ENCODE measurements at regions of chr13 and their contacts with region 1.

Region 1: GRCh38 chr13:78241278-78241919 is 322.8 kb upstream of the EDNRB start:
- DNase-seq: no peak
- H3K4me3 ChIP-seq: no peak overlapping the region
- H3K27ac ChIP-seq: no peak overlapping the region
- H3K4me1 ChIP-seq: no peaks in the 10 kb centered on the region
- H3K27me3 ChIP-seq: no peaks in the 10 kb centered on the region
- CTCF ChIP-seq: peak; percentile 52 to 80

Region 2: DNA sequence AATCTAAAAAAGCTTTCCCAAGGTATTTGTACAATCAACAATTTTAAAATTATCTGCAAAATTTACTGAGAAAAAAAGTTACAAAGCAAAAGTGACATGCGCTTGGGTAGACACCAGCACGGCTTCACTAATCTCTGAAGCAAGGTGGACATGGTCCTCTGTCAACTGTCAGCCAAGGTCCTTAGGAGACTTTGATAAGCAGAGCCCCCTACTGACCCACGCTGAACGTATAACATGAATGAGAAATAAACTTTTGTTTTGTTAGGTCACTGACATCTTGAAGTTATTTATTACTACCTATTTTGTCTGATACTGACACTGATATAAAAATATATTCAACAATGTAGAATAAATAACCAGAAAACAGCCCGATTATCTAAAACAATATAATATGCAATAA is 518.3 kb after region 1 on chr13:
- CTCF ChIA-PET with region 1: no interaction called
- dilution Hi-C with region 1: no loop called
- in situ Hi-C with region 1: no loop called
- intact Hi-C with region 1: loop called (anchors 2 kb)
- DNase-seq: no peak
- H3K4me3 ChIP-seq: no peak overlapping the region
- H3K27ac ChIP-seq: no peak overlapping the region
- H3K4me1 ChIP-seq: no peaks in the 10 kb centered on the region
- H3K27me3 ChIP-seq: peaks cover 2% of the 10 kb centered on the region
- CTCF ChIP-seq: no peak

Region 3: GRCh38 chr13:78978381-78978998 is 737.1 kb after region 1 on chr13:
- CTCF ChIA-PET with region 1: interaction called, 13 read pairs
- dilution Hi-C with region 1: no loop called
- in situ Hi-C with region 1: no loop called
- intact Hi-C with region 1: loop called (anchors 1 kb)
- DNase-seq: peak; percentile 37
- H3K4me3 ChIP-seq: no peak overlapping the region
- H3K27ac ChIP-seq: no peak overlapping the region
- H3K4me1 ChIP-seq: no peaks in the 10 kb centered on the region
- H3K27me3 ChIP-seq: peaks cover 6% of the 10 kb centered on the region
- CTCF ChIP-seq: peak; percentile 64 to 74

Region 4: GRCh38 chr13:79246578-79246949 is 1005.2 kb after region 1 on chr13:
- CTCF ChIA-PET with region 1: no interaction called
- dilution Hi-C with region 1: no loop called
- in situ Hi-C with region 1: no loop called
- intact Hi-C with region 1: loop called (anchors 5 kb)
- DNase-seq: no peak
- H3K4me3 ChIP-seq: no peak overlapping the region
- H3K27ac ChIP-seq: no peak overlapping the region
- H3K4me1 ChIP-seq: no peaks in the 10 kb centered on the region
- H3K27me3 ChIP-seq: no peaks in the 10 kb centered on the region
- CTCF ChIP-seq: peak; percentile 17 to 41

Measured in mammary epithelial cell (primary cell).